CD4-positive, alpha-beta memory T cell (primary cell): ENCODE measurements at regions of chr5 and their contacts with region 1.

Region 1: DNA sequence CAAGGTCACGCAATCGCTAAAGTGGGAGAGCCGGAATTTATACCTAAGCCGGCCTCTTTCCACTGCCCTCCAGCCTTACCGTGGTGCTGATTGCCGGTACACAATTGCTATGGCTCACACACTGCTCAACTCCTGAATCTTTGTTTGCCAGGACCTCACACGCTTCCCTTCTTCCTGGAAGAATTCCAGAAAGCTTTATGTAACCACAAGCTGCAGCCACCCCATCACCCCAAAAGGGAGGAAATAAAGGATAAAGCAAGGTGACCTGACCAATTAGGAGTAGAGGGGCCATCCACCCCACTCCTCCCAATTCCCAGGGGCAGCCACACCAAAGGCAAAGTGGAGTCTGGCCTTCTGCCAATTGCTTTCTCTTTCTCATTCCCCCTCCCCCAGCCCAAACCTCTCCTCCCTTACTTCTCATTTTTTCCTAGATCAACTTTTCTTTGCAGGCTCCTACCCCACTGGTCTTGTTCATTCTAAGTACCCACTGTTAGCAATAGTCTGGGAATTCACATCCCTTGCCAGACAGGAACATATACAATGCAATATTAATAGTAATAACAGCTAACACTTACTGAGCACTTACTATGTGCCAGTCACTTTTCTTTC is 18.0 kb upstream of the CDC23 start:
- DNase-seq: no peak
- H3K4me3 ChIP-seq: no peak overlapping the region
- H3K4me3 Mint-ChIP-seq: no peak overlapping the region
- H3K27ac ChIP-seq: no peak overlapping the region
- H3K27ac Mint-ChIP-seq: no peak overlapping the region
- H3K4me1 ChIP-seq: no peaks in the 10 kb centered on the region
- H3K4me1 Mint-ChIP-seq: no peaks in the 10 kb centered on the region
- H3K27me3 ChIP-seq: no peaks in the 10 kb centered on the region
- H3K27me3 Mint-ChIP-seq: peaks cover 7 to 13% of the 10 kb centered on the region in 2 donors

Region 2: DNA sequence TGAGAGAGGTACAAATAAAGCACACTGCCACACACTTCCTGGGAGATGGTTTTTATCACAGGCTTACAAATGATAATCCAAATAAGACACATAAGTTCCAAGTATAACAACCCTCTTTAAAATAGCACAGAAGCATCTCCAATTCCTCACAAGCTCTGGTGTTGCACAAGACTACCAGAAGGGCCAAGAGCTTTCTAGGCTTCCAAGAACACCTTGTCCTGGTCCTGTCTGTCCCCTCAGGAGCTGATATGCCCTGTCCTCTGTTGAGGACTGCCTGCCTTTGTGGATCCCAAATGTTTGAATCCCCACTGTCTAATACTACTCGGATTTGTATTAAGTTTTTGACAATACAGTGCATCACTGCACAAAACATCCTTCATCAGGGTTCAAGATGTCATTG is 842.0 kb before region 1 on chr5:
- CTCF ChIA-PET with region 1: no interaction called
- POLR2A ChIA-PET with region 1: no interaction called
- intact Hi-C with region 1: no loop called
- DNase-seq: no peak
- H3K4me3 ChIP-seq: no peak overlapping the region
- H3K4me3 Mint-ChIP-seq: no peak overlapping the region
- H3K27ac ChIP-seq: no peak overlapping the region
- H3K27ac Mint-ChIP-seq: no peak overlapping the region
- H3K4me1 ChIP-seq: no peaks in the 10 kb centered on the region
- H3K4me1 Mint-ChIP-seq: no peaks in the 10 kb centered on the region
- H3K27me3 ChIP-seq: no peaks in the 10 kb centered on the region
- H3K27me3 Mint-ChIP-seq: peaks cover 0 to 12% of the 10 kb centered on the region in 2 donors

Region 3: GRCh38 chr5:138303369-138303768 is 72.3 kb after region 1 on chr5:
- CTCF ChIA-PET with region 1: no interaction called
- POLR2A ChIA-PET with region 1: no interaction called
- intact Hi-C with region 1: loop called (anchors 5 kb)
- DNase-seq: no peak
- H3K4me3 ChIP-seq: no peak overlapping the region
- H3K4me3 Mint-ChIP-seq: no peak overlapping the region
- H3K27ac ChIP-seq: no peak overlapping the region
- H3K27ac Mint-ChIP-seq: no peak overlapping the region
- H3K4me1 ChIP-seq: no peaks in the 10 kb centered on the region
- H3K4me1 Mint-ChIP-seq: no peaks in the 10 kb centered on the region
- H3K27me3 ChIP-seq: no peaks in the 10 kb centered on the region
- H3K27me3 Mint-ChIP-seq: no peaks in the 10 kb centered on the region